T-cell (primary cell): ENCODE measurements at regions of chr20 and their contacts with region 1.

Region 1: DNA sequence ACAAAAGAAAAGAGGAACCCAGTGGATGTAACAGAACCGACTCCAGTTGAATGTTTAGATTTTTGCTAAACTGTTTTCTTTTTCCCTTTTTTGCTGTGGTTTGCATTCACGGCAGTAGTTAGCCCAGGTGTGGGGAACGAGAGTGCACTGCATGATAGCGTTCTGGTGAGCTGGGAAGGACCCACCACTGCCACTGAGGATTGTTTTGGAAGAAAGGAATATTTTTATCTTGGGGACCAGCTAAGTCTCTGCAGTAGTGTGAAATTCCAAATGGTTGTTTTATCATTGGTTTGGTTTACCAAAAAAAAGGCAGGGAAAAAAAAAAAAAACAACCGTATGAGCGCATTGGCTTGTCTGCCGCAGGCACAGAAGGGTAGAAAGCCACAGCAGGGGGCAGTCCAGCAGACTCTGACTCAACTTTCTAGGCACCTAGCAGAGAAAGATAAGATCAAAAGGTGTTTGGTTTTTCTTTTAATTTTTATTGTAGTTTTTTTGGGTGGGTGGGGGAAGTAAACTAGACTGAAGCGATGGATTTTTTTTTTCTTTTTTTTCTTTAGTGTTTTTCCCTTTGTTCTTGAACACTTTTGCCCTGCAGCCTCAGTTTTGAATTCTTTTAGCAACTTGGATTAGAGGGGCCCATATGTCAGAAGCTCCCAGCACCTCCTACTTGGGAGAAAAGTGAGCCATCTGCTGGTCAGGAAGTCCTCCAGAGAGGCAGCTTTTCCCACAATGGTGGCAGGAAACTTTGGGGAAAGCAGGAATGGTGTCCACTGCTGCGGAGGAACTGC is 13.5 kb upstream of the RAB5IF start:
- DNase-seq: peak in 31 of 35 experiments; percentile 14 to 75 (median 36)
- ATAC-seq: peak; percentile 45 to 69 (median 58)
- H3K4me3 ChIP-seq: no peak overlapping the region
- H3K4me3 Mint-ChIP-seq: peak overlapping the region; percentile 5 to 59 (median 45)
- H3K27ac ChIP-seq: peak overlapping the region; percentile 59
- H3K27ac Mint-ChIP-seq: peak overlapping the region; percentile 87 to 92
- H3K4me1 ChIP-seq: peaks cover 7 to 50% of the 10 kb centered on the region in 2 experiments
- H3K4me1 Mint-ChIP-seq: peaks cover 51 to 58% (median 54%) of the 10 kb centered on the region in 3 donors
- H3K27me3 ChIP-seq: no peaks in the 10 kb centered on the region
- H3K27me3 Mint-ChIP-seq: no peaks in the 10 kb centered on the region

Region 2: DNA sequence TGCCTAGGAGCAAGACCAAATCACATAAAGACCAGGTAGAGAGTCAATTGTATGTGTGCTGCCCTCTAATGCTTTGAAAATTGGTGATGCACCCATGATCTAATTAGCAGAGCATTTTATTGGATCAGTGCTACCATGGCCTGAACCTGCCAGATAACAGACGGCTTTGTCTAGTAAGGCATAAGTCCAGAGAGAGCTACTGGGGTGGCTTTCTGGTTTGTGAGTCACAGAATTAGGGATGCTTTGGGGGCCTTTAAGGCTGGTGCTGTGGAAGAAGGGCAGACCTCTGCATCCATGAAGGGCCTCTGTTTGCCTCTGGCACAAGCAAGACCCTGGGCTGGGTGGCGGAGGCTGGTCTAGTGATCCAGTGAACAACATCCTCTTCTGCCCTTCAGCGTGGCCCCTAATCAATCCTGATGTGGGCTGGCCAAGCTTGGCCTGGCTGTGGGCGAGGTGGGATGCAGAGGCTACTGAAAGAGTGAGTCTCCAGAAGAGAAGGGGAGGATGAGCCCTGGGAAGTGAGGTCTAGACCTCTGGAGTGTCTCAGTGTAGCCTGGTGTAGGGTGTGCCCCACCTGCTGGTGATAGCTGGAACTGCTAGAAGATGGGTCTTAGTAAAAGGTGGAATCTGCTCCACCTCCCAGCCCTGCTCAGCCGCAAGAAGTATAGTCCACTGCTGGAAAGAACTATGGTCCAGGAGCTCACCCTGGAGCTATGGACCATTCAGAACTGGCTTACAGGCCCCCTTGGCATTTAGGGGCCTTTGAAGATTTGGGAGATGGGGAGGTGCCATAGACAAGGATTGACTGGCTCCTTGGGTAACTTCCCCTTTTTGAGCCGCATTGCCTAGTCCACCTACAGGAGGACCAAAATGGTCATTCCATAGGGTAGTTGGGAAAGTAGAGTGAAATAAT is 392.4 kb before region 1 on chr20:
- CTCF ChIA-PET with region 1: no interaction called
- POLR2A ChIA-PET with region 1: interaction called in 1 of 2 experiments, 12 read pairs
- DNase-seq: peak; percentile 17 to 81 (median 58)
- ATAC-seq: peak; percentile 72 to 76 (median 72)
- H3K4me3 ChIP-seq: no peak overlapping the region
- H3K4me3 Mint-ChIP-seq: no peak overlapping the region
- H3K27ac ChIP-seq: no peak overlapping the region
- H3K27ac Mint-ChIP-seq: no peak overlapping the region
- H3K4me1 ChIP-seq: peaks cover 0 to 9% of the 10 kb centered on the region in 2 experiments
- H3K4me1 Mint-ChIP-seq: peaks cover 4 to 13% (median 5%) of the 10 kb centered on the region in 3 donors
- H3K27me3 ChIP-seq: peaks cover 0 to 28% of the 10 kb centered on the region in 2 experiments
- H3K27me3 Mint-ChIP-seq: peaks cover 14 to 20% of the 10 kb centered on the region in 2 donors

Region 3: GRCh38 chr20:36605399-36606157 is 13.5 kb after region 1 on chr20 and contains the start of gene RAB5IF:
- CTCF ChIA-PET with region 1: interaction called, 3 to 38 read pairs
- POLR2A ChIA-PET with region 1: interaction called, 4 to 20 read pairs
- DNase-seq: peak; percentile 97 to 100 (median 99)
- ATAC-seq: peak; percentile 91 to 94 (median 92)
- H3K4me3 ChIP-seq: peak within 1 kb of the TSS; percentile 87 to 98
- H3K4me3 Mint-ChIP-seq: peak within 1 kb of the TSS; percentile 97
- H3K27ac ChIP-seq: peak within 1 kb of the TSS; percentile 96
- H3K27ac Mint-ChIP-seq: peak within 1 kb of the TSS; percentile 96
- H3K4me1 ChIP-seq: peaks cover 9 to 38% of the 10 kb centered on the region in 2 experiments
- H3K4me1 Mint-ChIP-seq: peaks cover 29 to 38% (median 33%) of the 10 kb centered on the region in 3 donors
- H3K27me3 ChIP-seq: no peaks in the 10 kb centered on the region
- H3K27me3 Mint-ChIP-seq: peaks cover 0 to 1% of the 10 kb centered on the region in 2 donors
- total RNA-seq, gene RAB5IF: 53.6 to 72.2 (median 59.9) TPM